ENCODE measurements at regions of chr12 and their contacts with region 1.

Region 1: DNA sequence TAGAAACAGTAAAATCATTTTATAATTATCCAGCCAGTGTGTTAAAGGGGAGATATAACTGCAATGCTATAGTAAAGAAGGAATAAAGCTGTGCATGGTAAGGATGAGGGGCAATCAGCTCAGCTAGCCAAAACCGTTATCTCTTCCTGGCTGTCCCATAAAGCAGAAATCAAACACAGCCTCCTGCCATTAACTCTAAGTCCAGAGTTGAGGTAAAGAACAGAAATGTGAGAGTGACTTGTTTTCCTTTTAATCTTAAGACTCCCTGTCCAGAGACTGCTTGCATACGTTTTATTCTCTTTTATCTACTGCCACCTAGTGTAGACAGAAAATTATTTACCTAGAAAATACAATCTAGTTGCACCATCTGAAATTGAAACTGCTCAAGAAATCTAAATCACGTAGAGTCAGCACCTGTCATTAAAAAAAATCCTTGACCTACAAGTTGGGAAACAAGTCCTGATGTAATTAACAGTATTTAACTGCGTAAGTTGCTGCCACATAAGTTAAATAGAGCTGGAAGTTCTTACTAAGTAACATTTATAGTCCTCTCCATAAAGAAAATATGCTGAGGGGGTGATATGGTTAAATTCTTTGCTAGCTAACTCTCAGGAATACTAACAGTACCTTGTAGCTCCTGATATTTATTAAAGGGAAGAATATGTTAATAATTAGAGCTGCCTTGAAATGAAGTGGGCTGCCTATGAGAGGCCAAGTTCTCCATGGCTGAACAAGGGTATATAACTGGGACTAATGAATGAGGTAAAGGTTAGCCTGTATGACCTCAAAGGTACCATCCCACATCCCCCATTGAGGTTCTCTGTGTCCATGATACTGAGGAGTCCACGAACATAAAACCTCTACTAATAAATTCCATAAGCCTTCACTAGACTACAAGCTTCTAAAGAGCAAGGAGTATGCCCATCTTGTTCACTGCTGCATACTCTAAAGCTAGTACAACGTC is 62.7 kb downstream of the GALNT4 start:
- DNase-seq: no peak
- H3K4me3 ChIP-seq: no peak overlapping the region
- CTCF ChIP-seq: peak; percentile 12

Region 2: GRCh38 chr12:89029961-89030360 is 432.0 kb before region 1 on chr12:
- CTCF ChIA-PET with region 1: interaction called, 18 read pairs
- POLR2A ChIA-PET with region 1: no interaction called
- DNase-seq: no peak
- H3K4me3 ChIP-seq: no peak overlapping the region
- CTCF ChIP-seq: no peak

Region 3: DNA sequence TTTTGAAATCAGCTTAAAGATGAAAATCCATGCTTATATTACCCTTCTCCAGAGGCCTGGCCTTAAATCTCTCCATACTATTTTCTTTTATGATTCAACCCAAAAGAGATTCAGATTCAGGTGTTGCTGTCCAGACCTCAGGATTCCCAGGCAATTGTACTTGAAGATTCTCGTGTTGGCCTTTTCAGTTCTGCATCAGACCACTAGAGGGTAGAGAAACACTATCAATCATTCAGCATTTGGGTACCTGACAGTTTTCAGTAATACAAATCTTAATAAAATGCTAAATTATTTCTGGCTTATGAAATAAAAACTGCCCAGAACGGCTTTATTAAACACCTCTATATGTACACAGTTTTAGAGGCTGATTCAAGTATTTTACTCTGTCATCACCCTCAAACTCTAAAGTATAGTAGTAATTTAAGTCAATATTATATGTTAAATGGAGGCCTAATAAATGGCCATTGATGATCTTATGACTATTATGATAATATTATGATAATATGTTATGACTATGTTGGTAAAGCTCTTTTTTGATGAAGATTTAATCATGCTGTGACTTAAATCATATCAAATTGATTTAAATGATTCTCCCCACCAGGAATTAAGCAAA is 410.8 kb before region 1 on chr12:
- CTCF ChIA-PET with region 1: interaction called, 41 read pairs
- POLR2A ChIA-PET with region 1: no interaction called
- DNase-seq: no peak
- H3K4me3 ChIP-seq: no peak overlapping the region
- CTCF ChIP-seq: peak; percentile 70

Region 4: DNA sequence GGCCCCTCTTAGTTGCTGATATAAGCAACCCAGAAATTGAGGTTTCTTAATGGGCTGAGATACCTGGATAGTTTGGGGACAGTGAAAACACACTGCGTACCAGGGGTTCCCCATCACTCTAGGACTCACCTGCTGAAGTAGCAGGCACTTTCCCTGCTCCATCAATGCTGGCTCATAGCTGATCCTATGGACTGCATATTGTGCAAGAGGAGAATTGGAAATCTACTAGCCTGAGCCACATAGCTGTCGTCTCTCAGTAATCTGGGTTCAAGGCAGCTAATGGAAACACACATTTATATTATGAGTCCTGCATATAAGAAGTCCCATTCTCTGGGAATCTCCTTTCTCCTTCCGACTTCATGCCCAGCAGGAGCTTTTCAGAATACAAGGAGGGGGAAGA is 102.3 kb before region 1 on chr12:
- CTCF ChIA-PET with region 1: interaction called, 56 read pairs
- POLR2A ChIA-PET with region 1: interaction called, 10 read pairs
- DNase-seq: no peak
- H3K4me3 ChIP-seq: no peak overlapping the region
- CTCF ChIP-seq: no peak

Region 5: DNA sequence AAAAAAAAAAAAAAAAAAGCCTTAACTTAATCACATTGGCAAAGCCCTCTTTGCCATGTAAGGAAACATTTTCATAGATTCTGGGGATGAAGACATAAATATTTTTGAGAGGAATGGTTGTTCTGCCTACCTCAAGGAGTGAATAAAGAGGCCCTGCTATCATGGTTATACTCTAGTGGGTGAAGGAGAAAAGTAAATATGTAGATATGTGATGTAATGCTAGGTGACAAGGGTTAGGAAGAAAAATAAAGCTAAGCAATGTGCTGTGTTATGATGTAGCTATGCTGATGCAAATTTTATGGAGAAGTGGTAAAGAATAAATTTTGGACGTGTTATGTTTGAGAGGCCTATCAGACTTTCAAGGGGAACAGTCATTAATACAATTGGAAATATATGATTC is 29.5 kb before region 1 on chr12:
- CTCF ChIA-PET with region 1: no interaction called
- POLR2A ChIA-PET with region 1: no interaction called
- DNase-seq: no peak
- H3K4me3 ChIP-seq: no peak overlapping the region
- CTCF ChIP-seq: no peak

Region 6: GRCh38 chr12:89524541-89525285 is 62.8 kb after region 1 on chr12 and contains the start of gene GALNT4:
- CTCF ChIA-PET with region 1: interaction called, 258 read pairs
- POLR2A ChIA-PET with region 1: no interaction called
- DNase-seq: peak; percentile 40
- H3K4me3 ChIP-seq: peak within 1 kb of the TSS; percentile 97
- CTCF ChIP-seq: peak; percentile 90

Measured in AG04449 (cell line).